ENCODE measurements at regions of chr10 and their contacts with region 1.

Region 1: DNA sequence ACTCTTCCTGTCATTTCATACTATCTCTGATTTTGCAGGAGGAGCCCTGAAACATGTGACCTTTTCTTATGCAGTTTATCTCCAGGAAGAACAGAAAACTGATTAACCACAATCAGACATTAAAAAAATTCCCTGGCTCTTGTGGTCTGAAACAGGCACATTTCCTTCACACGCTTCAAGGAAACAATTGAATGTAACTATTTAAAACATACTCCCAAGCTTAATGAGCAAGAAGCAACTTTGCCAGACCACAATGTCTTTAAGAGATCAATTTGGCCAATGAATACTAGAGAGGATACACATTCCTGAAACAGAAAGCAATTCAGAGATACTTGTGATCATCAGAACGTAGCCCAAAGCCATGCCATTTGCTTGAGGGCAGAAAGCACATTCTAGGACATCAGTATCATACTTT is 65.8 kb downstream of the PIP4K2A start:
- DNase-seq: peak; percentile 75
- ATAC-seq: peak; percentile 72
- H3K4me3 ChIP-seq: no peak overlapping the region
- H3K27ac ChIP-seq: peak overlapping the region; percentile 78
- H3K4me1 ChIP-seq: peaks cover 83% of the 10 kb centered on the region
- H3K27me3 ChIP-seq: no peaks in the 10 kb centered on the region
- CTCF ChIP-seq: no peak
- EP300 ChIP-seq: peak; percentile 32 to 50; a peak in 2 of 4 replicates
- POLR2A ChIP-seq: no peak
- RAD21 ChIP-seq: no peak

Region 2: GRCh38 chr10:21626457-21627161 is 1021.9 kb before region 1 on chr10:
- CTCF ChIA-PET with region 1: no interaction called
- POLR2A ChIA-PET with region 1: no interaction called
- RAD21 ChIA-PET with region 1: no interaction called
- SMC1A ChIA-PET with region 1: no interaction called
- in situ Hi-C with region 1: no loop called
- intact Hi-C with region 1: no loop called
- DNase-seq: no peak
- ATAC-seq: no peak
- H3K4me3 ChIP-seq: no peak overlapping the region
- H3K27ac ChIP-seq: no peak overlapping the region
- H3K4me1 ChIP-seq: no peaks in the 10 kb centered on the region
- H3K27me3 ChIP-seq: no peaks in the 10 kb centered on the region
- CTCF ChIP-seq: no peak
- EP300 ChIP-seq: no peak
- POLR2A ChIP-seq: no peak
- RAD21 ChIP-seq: no peak

Region 3: DNA sequence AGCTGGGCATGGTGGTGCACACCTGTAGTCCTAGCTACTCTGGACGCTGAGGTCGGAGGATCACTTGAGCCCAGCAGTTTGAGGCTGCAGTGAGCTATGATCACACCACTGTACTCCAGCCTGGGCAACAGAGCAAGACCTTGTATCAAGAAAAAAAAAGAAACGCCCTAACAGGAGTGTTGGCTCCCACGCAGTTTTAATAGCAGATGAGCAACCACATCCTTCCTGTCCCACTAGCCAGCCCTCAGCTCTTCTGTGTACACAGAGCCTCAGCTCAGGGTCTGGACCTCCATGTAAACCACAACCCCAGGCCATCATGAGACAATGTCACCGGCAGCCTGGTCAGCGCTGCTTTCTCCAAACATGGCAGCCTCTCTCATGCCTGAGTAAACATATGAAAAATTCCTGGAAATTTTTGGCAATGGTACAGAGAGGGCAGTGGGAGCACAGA is 42.4 kb before region 1 on chr10:
- CTCF ChIA-PET with region 1: interaction called, 8 read pairs
- POLR2A ChIA-PET with region 1: interaction called, 30 read pairs
- RAD21 ChIA-PET with region 1: interaction called, 40 read pairs
- SMC1A ChIA-PET with region 1: interaction called, 19 read pairs
- in situ Hi-C with region 1: no loop called
- intact Hi-C with region 1: loop called (anchors 5 kb)
- DNase-seq: peak; percentile 93
- ATAC-seq: peak; percentile 88
- H3K4me3 ChIP-seq: peak overlapping the region; percentile 33
- H3K27ac ChIP-seq: peak overlapping the region; percentile 81
- H3K4me1 ChIP-seq: peaks cover 70% of the 10 kb centered on the region
- H3K27me3 ChIP-seq: no peaks in the 10 kb centered on the region
- CTCF ChIP-seq: no peak
- EP300 ChIP-seq: peak; percentile 79 to 89
- POLR2A ChIP-seq: peak; percentile 65
- RAD21 ChIP-seq: 0 out of 2 replicates have a peak, but pooled peaks have one; percentile 9

Region 4: DNA sequence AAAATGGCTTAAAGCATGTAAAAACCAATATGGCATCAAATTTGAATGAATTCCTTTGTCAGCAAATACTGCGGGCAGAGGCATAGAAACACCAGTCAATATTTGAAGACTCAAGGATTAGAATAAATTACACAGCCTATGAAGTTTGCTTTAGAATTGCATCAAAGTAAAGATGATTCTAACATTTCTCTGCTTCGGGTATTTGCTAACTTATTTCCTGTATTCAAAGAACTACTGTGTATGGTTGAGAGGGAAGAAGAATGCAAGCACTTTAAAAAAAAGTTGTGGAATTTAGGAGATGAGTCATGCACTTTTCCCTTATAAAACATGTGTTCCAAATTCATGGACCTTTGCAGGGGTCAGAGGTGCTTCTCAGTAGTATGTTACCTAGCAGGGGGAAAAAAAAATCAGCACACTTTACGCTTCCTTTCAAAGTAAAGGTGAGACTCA is 24.2 kb before region 1 on chr10:
- CTCF ChIA-PET with region 1: interaction called, 72 read pairs
- POLR2A ChIA-PET with region 1: interaction called, 24 read pairs
- RAD21 ChIA-PET with region 1: interaction called, 99 read pairs
- SMC1A ChIA-PET with region 1: interaction called, 172 read pairs
- in situ Hi-C with region 1: no loop called
- intact Hi-C with region 1: no loop called
- DNase-seq: no peak
- ATAC-seq: no peak
- H3K4me3 ChIP-seq: no peak overlapping the region
- H3K27ac ChIP-seq: no peak overlapping the region
- H3K4me1 ChIP-seq: peaks cover 34% of the 10 kb centered on the region
- H3K27me3 ChIP-seq: no peaks in the 10 kb centered on the region
- CTCF ChIP-seq: no peak
- EP300 ChIP-seq: no peak
- POLR2A ChIP-seq: no peak
- RAD21 ChIP-seq: no peak

Region 5: DNA sequence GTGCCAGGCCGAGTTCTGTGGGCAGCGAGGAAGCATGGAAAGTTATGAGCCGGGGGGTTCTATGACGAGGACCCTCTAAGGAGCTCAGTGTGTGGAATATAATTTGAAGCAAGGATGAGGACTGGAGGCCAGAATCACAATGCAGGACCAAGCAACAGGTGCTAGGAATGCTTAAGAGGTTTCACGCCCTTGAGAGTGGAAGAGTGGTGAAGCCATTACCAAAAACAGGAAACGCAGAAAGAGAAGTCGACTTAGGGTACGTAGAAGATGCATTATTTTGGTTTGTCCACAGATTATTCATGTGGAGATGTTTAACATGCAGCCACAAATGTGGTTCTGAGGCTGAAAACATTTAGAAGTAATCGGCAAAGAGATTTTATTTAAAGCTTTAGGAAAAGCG is 12.9 kb before region 1 on chr10:
- CTCF ChIA-PET with region 1: interaction called, 72 read pairs
- POLR2A ChIA-PET with region 1: interaction called, 24 read pairs
- RAD21 ChIA-PET with region 1: interaction called, 99 read pairs
- SMC1A ChIA-PET with region 1: interaction called, 172 read pairs
- in situ Hi-C with region 1: no loop called
- intact Hi-C with region 1: loop called (anchors 2 kb)
- DNase-seq: no peak
- ATAC-seq: peak; percentile 39
- H3K4me3 ChIP-seq: peak overlapping the region; percentile 40; the same call in 1 of the 2 replicates
- H3K27ac ChIP-seq: peak overlapping the region; percentile 66
- H3K4me1 ChIP-seq: peaks cover 40% of the 10 kb centered on the region
- H3K27me3 ChIP-seq: no peaks in the 10 kb centered on the region
- CTCF ChIP-seq: no peak
- EP300 ChIP-seq: no peak
- POLR2A ChIP-seq: no peak
- RAD21 ChIP-seq: no peak

Region 6: GRCh38 chr10:22682237-22683139 is 33.9 kb after region 1 on chr10:
- CTCF ChIA-PET with region 1: interaction called, 10 read pairs
- POLR2A ChIA-PET with region 1: interaction called, 11 read pairs
- RAD21 ChIA-PET with region 1: interaction called, 48 read pairs
- SMC1A ChIA-PET with region 1: interaction called, 36 read pairs
- in situ Hi-C with region 1: no loop called
- intact Hi-C with region 1: no loop called
- DNase-seq: peak; percentile 52
- ATAC-seq: peak; percentile 64
- H3K4me3 ChIP-seq: peak overlapping the region; percentile 45; the same call in 1 of the 2 replicates
- H3K27ac ChIP-seq: peak overlapping the region; percentile 82
- H3K4me1 ChIP-seq: peaks cover 43% of the 10 kb centered on the region
- H3K27me3 ChIP-seq: no peaks in the 10 kb centered on the region
- CTCF ChIP-seq: no peak
- EP300 ChIP-seq: no peak
- POLR2A ChIP-seq: no peak
- RAD21 ChIP-seq: no peak

Region 7: DNA sequence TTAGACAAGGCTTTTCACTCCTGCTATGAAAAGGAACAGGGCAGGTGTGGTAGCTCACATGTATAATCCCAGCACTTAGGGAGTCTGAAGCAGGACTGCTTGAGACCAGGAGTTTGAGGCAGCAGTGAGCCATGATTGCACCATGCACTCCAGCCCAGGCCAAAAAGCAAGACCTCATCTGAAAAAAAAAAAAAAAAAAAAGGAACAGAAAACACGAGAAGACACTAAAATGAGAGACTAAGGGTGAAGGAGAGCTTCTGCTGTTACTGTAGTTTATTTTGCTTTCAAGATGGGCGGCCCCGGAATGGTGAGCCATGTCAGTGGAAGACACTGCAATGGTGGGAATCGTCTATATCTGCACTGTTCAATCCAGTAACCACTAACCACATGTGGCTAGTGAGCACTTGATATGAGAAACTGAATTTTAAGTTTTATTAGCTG is 55.9 kb after region 1 on chr10:
- CTCF ChIA-PET with region 1: interaction called, 8 read pairs
- POLR2A ChIA-PET with region 1: interaction called, 10 read pairs
- RAD21 ChIA-PET with region 1: interaction called, 22 read pairs
- SMC1A ChIA-PET with region 1: interaction called, 72 read pairs
- in situ Hi-C with region 1: no loop called
- intact Hi-C with region 1: no loop called
- DNase-seq: no peak
- ATAC-seq: peak; percentile 53
- H3K4me3 ChIP-seq: peak overlapping the region; percentile 66; the same call in 1 of the 2 replicates
- H3K27ac ChIP-seq: peak overlapping the region; percentile 76
- H3K4me1 ChIP-seq: peaks cover 65% of the 10 kb centered on the region
- H3K27me3 ChIP-seq: no peaks in the 10 kb centered on the region
- CTCF ChIP-seq: no peak
- EP300 ChIP-seq: no peak
- POLR2A ChIP-seq: no peak
- RAD21 ChIP-seq: 0 out of 2 replicates have a peak, but pooled peaks have one; percentile 9

Region 8: GRCh38 chr10:23270531-23270930 is 622.0 kb after region 1 on chr10:
- CTCF ChIA-PET with region 1: no interaction called
- POLR2A ChIA-PET with region 1: no interaction called
- RAD21 ChIA-PET with region 1: no interaction called
- SMC1A ChIA-PET with region 1: no interaction called
- in situ Hi-C with region 1: no loop called
- intact Hi-C with region 1: no loop called
- DNase-seq: no peak
- ATAC-seq: no peak
- H3K4me3 ChIP-seq: no peak overlapping the region
- H3K27ac ChIP-seq: no peak overlapping the region
- H3K4me1 ChIP-seq: no peaks in the 10 kb centered on the region
- H3K27me3 ChIP-seq: no peaks in the 10 kb centered on the region
- CTCF ChIP-seq: no peak
- EP300 ChIP-seq: no peak
- POLR2A ChIP-seq: no peak
- RAD21 ChIP-seq: no peak

Measured in GM12878 (cell line).